ENCODE measurements at regions of chr12 and their contacts with region 1.

Region 1: GRCh38 chr12:53757095-53757770 is 5.5 kb upstream of the CISTR start:
- DNase-seq: peak; percentile 81 to 87 (median 84)
- ATAC-seq: peak; percentile 90
- H3K4me3 ChIP-seq: no peak overlapping the region
- H3K27ac ChIP-seq: no peak overlapping the region
- H3K4me1 ChIP-seq: peaks cover 2 to 3% of the 10 kb centered on the region in 2 experiments; a peak in 2 of 5 replicates
- H3K27me3 ChIP-seq: peaks cover 40 to 76% of the 10 kb centered on the region in 2 experiments
- CTCF ChIP-seq: peak; percentile 81 to 95 (median 87)
- EP300 ChIP-seq: no peak
- POLR2A ChIP-seq: no peak
- RAD21 ChIP-seq: peak in 1 of 2 experiments; percentile 49; a peak in 2 of 4 replicates

Region 2: GRCh38 chr12:54214553-54215406 is 457.5 kb after region 1 on chr12:
- CTCF ChIA-PET with region 1: no interaction called
- POLR2A ChIA-PET with region 1: no interaction called
- in situ Hi-C with region 1: loop called (anchors 25 kb)
- intact Hi-C with region 1: loop called (anchors 10 kb)
- DNase-seq: peak; percentile 88 to 95 (median 94)
- ATAC-seq: peak; percentile 91
- H3K4me3 ChIP-seq: peak overlapping the region; percentile 44
- H3K27ac ChIP-seq: peak overlapping the region; percentile 50; the same call in 2 of the 3 replicates
- H3K4me1 ChIP-seq: peaks cover 25 to 48% of the 10 kb centered on the region in 2 experiments
- H3K27me3 ChIP-seq: no peaks in the 10 kb centered on the region
- CTCF ChIP-seq: peak; percentile 99 to 100 (median 99)
- EP300 ChIP-seq: peak; percentile 40; the same call in 1 of the 2 replicates
- POLR2A ChIP-seq: peak; percentile 47; the same call in 1 of the 2 replicates
- RAD21 ChIP-seq: peak; percentile 70 to 81

Measured in K562 (cell line).